ENCODE measurements at regions of chr5 and their contacts with region 1.

Region 1: DNA sequence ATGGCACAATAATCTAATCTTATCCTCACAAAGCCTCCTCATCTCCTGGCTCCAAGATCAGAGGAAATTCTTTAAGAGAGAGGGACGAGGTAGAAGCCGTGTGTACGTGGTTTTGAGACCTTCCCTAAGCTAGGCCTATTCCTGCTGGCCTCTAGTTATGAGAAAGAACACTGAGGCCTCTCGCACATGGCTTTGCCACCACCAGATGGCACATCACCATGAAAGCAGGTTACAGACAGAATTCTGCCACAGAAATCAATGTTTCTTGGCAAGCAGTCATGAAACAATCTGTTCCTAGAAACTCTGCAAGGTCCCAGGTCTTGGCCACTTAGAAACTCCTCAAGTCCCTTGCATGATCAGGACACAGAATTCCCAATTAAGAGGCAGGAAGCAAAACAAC is 268.2 kb upstream of the TAS2R1 start:
- DNase-seq: peak; percentile 24 to 82 (median 47)
- H3K4me3 ChIP-seq: no peak overlapping the region
- H3K27ac ChIP-seq: no peak overlapping the region
- H3K4me1 ChIP-seq: no peaks in the 10 kb centered on the region
- H3K27me3 ChIP-seq: no peaks in the 10 kb centered on the region
- CTCF ChIP-seq: peak; percentile 25 to 54 (median 41)
- POLR2A ChIP-seq: no peak

Region 2: GRCh38 chr5:10145923-10146401 is 247.6 kb after region 1 on chr5:
- intact Hi-C with region 1: loop called in 1 of 2 experiments (anchors 10 kb)
- DNase-seq: peak in 2 of 7 donors; percentile 16 to 21
- H3K4me3 ChIP-seq: no peak overlapping the region
- H3K27ac ChIP-seq: no peak overlapping the region
- H3K4me1 ChIP-seq: no peaks in the 10 kb centered on the region
- H3K27me3 ChIP-seq: no peaks in the 10 kb centered on the region
- CTCF ChIP-seq: peak in 5 of 6 experiments; percentile 27 to 43 (median 41)
- POLR2A ChIP-seq: no peak